IMR-90 (cell line): ENCODE measurements at regions of chr14 and their contacts with region 1.

Region 1: GRCh38 chr14:41806366-41807000 is 199.8 kb downstream of the LRFN5 start:
- DNase-seq: no peak
- ATAC-seq: no peak
- H3K4me3 ChIP-seq: no peak overlapping the region
- H3K27ac ChIP-seq: no peak overlapping the region
- H3K4me1 ChIP-seq: no peaks in the 10 kb centered on the region
- H3K27me3 ChIP-seq: no peaks in the 10 kb centered on the region
- CTCF ChIP-seq: no peak
- POLR2A ChIP-seq: no peak
- RAD21 ChIP-seq: no peak

Region 2: DNA sequence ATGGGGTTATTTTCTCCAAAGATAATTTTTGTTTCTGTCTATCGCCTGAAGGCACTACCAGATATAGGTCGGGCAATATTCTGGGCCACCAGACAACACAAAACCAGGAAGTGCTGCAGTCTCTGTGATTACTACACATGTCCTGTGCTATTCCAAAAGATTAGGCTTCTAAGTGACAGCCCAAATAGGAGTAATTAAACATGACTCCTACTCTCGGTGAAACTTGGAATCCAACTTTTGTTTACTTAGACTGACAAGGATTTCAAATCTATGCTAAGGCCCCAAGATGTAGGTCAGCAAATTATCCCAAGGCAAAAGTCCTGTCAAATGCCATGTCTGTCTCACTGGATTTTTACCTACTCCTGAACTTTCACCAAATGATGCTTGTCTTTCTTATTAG is 357.4 kb before region 1 on chr14:
- CTCF ChIA-PET with region 1: no interaction called
- POLR2A ChIA-PET with region 1: no interaction called
- dilution Hi-C with region 1: no loop called
- in situ Hi-C with region 1: no loop called
- intact Hi-C with region 1: no loop called
- DNase-seq: no peak
- ATAC-seq: no peak
- H3K4me3 ChIP-seq: no peak overlapping the region
- H3K27ac ChIP-seq: no peak overlapping the region
- H3K4me1 ChIP-seq: no peaks in the 10 kb centered on the region
- H3K27me3 ChIP-seq: no peaks in the 10 kb centered on the region
- CTCF ChIP-seq: no peak
- POLR2A ChIP-seq: no peak
- RAD21 ChIP-seq: no peak

Region 3: DNA sequence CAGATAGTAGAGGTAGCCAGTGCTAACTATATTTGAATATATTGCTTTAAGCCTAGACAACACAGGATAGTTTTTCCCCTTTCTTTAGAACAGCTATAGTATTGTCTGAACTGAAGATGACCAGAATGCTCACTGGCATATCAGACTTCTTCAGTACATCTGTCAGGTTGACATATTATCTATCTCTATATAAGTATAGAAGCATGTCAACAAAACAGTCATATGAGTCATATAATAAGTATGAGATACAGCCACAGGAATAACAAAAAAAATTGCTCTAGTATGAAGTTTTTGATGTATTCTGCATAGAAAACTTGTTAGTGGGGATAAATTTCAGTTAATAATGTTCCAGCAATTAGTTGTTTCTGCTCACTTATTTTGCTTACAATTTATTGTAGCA is 567.8 kb after region 1 on chr14:
- CTCF ChIA-PET with region 1: no interaction called
- POLR2A ChIA-PET with region 1: no interaction called
- dilution Hi-C with region 1: no loop called
- in situ Hi-C with region 1: no loop called
- intact Hi-C with region 1: loop called (anchors 5 kb)
- DNase-seq: no peak
- ATAC-seq: no peak
- H3K4me3 ChIP-seq: no peak overlapping the region
- H3K27ac ChIP-seq: no peak overlapping the region
- H3K4me1 ChIP-seq: no peaks in the 10 kb centered on the region
- H3K27me3 ChIP-seq: no peaks in the 10 kb centered on the region
- CTCF ChIP-seq: no peak
- POLR2A ChIP-seq: no peak
- RAD21 ChIP-seq: no peak